ENCODE measurements at regions of chr3 and their contacts with region 1.

Region 1: DNA sequence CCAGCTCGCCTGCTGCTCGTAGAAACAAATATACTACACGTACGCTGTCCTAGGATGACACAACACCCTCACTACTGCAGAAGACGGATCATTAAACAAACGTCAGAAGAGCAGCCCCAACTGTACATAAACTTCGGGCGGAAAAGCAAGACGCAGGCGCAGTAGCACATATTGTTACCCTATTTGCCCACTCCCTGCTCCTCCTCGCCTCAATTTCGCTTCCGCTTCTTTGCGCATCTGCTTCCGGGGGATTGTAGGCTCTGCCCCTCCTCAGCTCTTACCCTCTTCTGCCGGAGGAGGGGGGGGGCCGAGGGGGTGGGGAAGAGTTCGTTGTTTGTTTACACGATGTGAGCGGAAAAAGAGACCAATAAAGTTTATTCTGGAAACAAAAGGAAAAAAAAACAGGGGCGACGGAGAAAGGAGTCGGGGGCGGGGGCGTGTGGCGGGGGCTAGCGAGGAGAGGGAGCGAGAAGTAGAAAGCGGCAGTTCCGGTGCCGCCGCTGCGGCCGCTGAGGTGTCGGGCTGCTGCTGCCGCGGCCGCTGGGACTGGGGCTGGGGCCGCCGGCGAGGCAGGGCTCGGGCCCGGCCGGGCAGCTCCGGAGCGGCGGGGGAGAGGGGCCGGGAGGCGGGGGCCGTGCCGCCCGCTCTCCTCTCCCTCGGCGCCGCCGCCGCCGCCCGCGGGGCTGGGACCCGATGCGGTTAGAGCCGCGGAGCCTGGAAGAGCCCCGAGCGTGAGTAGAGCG is at the start of gene PIK3CA:
- DNase-seq: peak; percentile 96 to 97
- ATAC-seq: peak; percentile 94 to 95
- H3K4me3 ChIP-seq: peak within 1 kb of the TSS; percentile 68 to 96 (median 94)
- H3K27ac ChIP-seq: peak within 1 kb of the TSS; percentile 93 to 98 (median 94)
- H3K4me1 ChIP-seq: peaks cover 30 to 33% of the 10 kb centered on the region in 2 donors
- H3K27me3 ChIP-seq: no peaks in the 10 kb centered on the region
- CTCF ChIP-seq: no peak
- POLR2A ChIP-seq: peak; percentile 44 to 72
- total RNA-seq, gene PIK3CA: 16.0 to 29.4 (median 23.1) TPM

Region 2: GRCh38 chr3:179071550-179072397 is 76.3 kb before region 1 on chr3 and contains the start of gene ZMAT3:
- in situ Hi-C with region 1: no loop called
- intact Hi-C with region 1: loop called (anchors 2 kb)
- DNase-seq: peak; percentile 73 to 79
- ATAC-seq: peak; percentile 92 to 95
- H3K4me3 ChIP-seq: peak within 1 kb of the TSS; percentile 63 to 82 (median 70)
- H3K27ac ChIP-seq: peak within 1 kb of the TSS; percentile 76 to 92 (median 84)
- H3K4me1 ChIP-seq: peaks cover 5 to 6% of the 10 kb centered on the region in 2 donors
- H3K27me3 ChIP-seq: no peaks in the 10 kb centered on the region
- CTCF ChIP-seq: no peak
- POLR2A ChIP-seq: peak; percentile 66 to 70
- total RNA-seq, gene ZMAT3: 3.8 to 9.7 (median 7.3) TPM

Region 3: GRCh38 chr3:179260949-179261765 is 113.1 kb after region 1 on chr3:
- in situ Hi-C with region 1: no loop called
- intact Hi-C with region 1: loop called (anchors 2 kb)
- DNase-seq: peak; percentile 27 to 50
- ATAC-seq: peak; percentile 72 to 90
- H3K4me3 ChIP-seq: peak overlapping the region; percentile 58 to 78 (median 72)
- H3K27ac ChIP-seq: peak overlapping the region; percentile 25 to 70 (median 50)
- H3K4me1 ChIP-seq: no peaks in the 10 kb centered on the region
- H3K27me3 ChIP-seq: no peaks in the 10 kb centered on the region
- CTCF ChIP-seq: no peak
- POLR2A ChIP-seq: peak in 1 of 2 donors; percentile 16

Region 4: DNA sequence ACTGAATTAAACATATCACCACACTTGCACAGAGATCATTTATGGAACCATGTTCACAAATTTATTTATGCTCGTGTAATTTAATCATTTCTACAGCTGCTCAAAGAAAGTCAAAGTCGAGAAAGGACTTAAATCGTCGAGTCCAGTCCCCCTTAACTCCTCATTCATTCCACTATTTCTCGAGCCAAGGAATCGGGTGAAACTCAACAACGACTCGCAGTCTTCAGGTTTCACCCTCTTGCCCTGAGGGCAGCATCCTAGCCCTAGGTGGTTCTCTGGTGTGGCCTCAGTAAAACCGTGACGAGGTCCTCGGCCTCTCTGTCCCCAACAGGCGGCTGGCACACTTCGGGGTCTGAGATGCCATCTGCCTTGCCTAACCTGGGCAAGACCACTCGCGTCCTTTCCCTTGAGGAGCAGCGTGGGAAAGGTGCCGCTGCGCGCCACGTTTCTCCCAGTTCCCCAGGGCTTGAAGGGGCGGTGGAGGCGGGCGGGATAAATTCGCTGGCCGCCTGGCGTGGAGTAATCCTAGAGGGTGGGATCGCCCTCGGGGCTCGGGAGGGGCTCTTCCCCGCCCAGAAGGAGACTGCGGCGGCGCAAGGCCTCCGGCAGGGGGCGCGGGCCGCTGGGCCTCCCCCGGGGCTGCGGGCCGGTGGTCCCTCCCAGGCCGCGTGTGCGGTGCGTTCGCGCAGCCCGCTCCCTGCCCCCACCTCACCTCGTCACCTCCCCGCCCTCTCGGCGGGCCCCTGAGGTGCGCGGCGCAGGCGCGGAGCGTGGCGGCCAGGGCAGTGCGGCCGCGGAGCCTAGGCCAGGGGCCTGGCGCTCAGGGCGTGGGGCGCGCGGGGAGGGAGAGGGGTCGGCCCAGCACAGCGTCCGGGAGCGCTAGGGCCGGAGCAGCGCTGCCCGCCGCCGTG is 174.5 kb after region 1 on chr3 and contains the start of gene ZNF639:
- in situ Hi-C with region 1: loop called in 3 of 4 experiments (anchors 5 to 10 kb)
- intact Hi-C with region 1: loop called (anchors 1 kb)
- DNase-seq: peak; percentile 54 to 80
- ATAC-seq: peak; percentile 76 to 83
- H3K4me3 ChIP-seq: peak within 1 kb of the TSS; percentile 85 to 94 (median 92)
- H3K27ac ChIP-seq: peak within 1 kb of the TSS; percentile 89 to 96 (median 92)
- H3K4me1 ChIP-seq: peaks cover 23 to 28% of the 10 kb centered on the region in 2 donors
- H3K27me3 ChIP-seq: no peaks in the 10 kb centered on the region
- CTCF ChIP-seq: peak; percentile 74 to 93 (median 89)
- POLR2A ChIP-seq: peak; percentile 88 to 91
- total RNA-seq, gene ZNF639: 28.7 to 43.7 (median 39.7) TPM

Region 5: DNA sequence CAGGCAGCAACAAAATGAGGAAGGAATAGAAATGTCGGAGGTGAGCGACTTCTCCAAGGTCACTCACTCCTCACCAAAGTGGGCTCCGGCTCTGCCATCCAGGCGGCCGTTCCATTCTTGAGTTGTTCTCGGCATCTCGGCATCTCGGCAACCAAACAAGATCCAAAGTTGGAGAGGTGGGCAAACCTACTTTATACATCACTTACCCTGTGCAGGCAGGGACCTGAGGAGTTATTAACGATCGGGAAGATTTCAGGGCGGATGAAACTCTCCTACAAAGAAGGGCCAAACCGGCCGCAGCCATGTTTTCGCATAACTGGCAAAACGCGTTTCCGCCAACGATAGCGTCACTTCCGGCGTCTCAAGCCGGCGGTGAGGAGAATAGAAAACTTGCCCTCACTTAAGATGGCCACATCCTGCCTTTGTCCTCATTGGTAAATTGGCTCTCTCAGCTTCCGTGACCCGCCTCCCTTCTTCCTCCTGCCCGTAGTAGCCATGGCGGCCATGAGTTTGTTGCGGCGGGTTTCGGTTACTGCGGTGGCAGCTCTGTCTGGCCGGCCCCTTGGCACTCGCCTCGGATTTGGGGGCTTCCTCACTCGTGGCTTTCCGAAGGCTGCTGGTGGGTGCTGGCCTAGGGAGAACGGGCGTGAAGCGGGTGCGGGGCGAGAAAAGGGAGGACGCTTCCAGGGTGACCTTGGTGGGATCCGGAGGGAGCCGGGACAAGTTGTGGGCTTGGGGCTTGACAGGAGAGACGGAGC is 456.5 kb after region 1 on chr3 and contains the starts of genes MRPL47 and NDUFB5:
- in situ Hi-C with region 1: loop called in 1 of 4 experiments (anchors 25 kb)
- intact Hi-C with region 1: loop called (anchors 5 kb)
- DNase-seq: peak; percentile 93 to 94
- ATAC-seq: peak; percentile 100
- H3K4me3 ChIP-seq: peak within 1 kb of the TSS; percentile 84 to 94 (median 88)
- H3K27ac ChIP-seq: peak within 1 kb of the TSS; percentile 90 to 97 (median 92)
- H3K4me1 ChIP-seq: peaks cover 30 to 40% of the 10 kb centered on the region in 2 donors
- H3K27me3 ChIP-seq: no peaks in the 10 kb centered on the region
- CTCF ChIP-seq: no peak
- POLR2A ChIP-seq: peak; percentile 80 to 88
- total RNA-seq, gene MRPL47: 34.9 to 74.0 (median 41.2) TPM
- total RNA-seq, gene NDUFB5: 127 to 348 (median 179) TPM